ENCODE measurements at regions of chr6 and their contacts with region 1.

Region 1: GRCh38 chr6:56604186-56604585 is 38.5 kb downstream of the DST start:
- DNase-seq: no peak
- CTCF ChIP-seq: no peak

Region 2: GRCh38 chr6:56618050-56618449 is 13.9 kb after region 1 on chr6:
- CTCF ChIA-PET with region 1: interaction called, 10 read pairs
- POLR2A ChIA-PET with region 1: no interaction called
- DNase-seq: no peak
- CTCF ChIP-seq: no peak

Region 3: DNA sequence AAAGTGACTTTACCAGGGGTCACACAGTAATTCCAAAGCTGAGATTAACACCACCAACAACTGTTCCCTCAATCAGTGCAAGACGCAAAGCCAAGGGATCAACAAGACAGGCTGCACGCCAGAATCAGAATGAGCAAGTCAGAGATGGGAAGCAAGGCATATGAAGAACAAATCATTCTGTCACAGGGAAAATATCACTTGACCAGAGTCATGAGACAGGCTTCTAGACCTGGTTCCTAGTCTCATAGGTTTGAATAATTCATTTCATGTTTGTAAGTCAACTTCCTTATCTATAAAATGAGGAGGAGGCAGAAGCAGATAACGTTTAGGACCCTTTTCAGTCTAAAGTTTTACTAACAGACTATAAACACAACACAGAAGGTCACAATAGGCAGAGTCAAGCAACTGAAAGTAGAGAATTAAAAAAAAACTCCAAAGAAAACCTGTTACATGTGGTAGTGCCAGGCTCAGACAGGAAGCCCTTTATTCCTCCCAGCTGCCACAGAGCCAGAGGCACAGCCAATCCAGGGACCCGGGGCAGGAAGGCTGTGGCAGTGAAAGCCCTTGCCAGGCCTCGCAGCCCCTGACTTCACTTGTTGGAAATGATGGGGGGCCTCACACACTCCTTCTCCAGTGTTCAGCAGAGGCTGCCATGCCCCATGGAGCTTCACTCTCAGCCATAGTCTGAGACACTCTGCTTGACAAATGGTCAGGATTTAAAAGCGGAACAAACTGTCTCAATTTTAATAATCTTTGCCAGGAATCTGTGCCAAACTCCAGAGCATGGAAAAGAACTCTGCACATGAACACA is 67.7 kb after region 1 on chr6:
- CTCF ChIA-PET with region 1: no interaction called
- POLR2A ChIA-PET with region 1: no interaction called
- DNase-seq: no peak
- CTCF ChIP-seq: no peak

Region 4: GRCh38 chr6:56683882-56684281 is 79.7 kb after region 1 on chr6:
- CTCF ChIA-PET with region 1: no interaction called
- POLR2A ChIA-PET with region 1: no interaction called
- DNase-seq: no peak
- CTCF ChIP-seq: no peak

Region 5: DNA sequence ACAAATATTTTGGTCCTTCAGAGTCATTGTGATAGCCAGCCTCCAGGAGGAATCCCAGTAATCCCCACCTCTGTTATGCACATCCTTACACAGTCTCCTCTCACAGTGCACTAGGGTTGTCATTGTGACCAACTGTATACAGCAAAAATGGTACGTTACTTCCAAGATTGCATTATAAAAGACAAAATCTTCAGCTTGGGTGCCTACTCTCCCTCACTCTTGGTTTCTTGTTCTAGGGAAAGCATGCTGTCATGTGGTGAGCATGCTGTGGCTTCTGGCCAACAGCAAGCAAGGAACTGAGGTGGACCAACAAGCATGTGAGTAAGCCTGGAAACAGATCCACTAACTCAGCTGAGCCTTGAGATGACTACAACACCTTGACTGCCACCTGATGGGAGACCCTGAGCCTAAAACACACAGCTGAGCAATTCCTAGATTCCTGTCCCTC is 168.6 kb after region 1 on chr6:
- CTCF ChIA-PET with region 1: no interaction called
- POLR2A ChIA-PET with region 1: no interaction called
- DNase-seq: no peak
- CTCF ChIP-seq: no peak

Region 6: DNA sequence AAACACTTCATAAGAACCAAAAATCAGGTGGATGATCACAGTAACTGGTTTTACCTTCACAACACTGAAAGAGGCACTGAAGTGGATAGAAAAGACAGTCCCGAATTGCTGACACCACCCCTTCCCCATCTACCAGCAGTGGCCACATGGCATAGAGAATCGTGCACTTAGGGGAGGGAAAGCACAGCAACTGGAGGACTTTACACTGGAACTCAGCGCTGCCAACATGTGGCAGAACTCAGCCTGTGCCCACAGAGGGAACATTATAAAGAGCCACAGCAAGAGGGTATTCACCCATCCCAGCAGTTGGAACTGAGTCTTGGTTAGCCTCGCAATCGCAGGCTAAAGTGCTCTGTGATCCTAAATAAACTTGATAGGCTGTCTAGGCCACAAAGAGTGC is 435.8 kb after region 1 on chr6:
- CTCF ChIA-PET with region 1: no interaction called
- POLR2A ChIA-PET with region 1: no interaction called
- DNase-seq: no peak
- CTCF ChIP-seq: no peak